ENCODE measurements at regions of chr10 and their contacts with region 1.

Region 1: GRCh38 chr10:100009793-100010676 is at the start of gene DNMBP:
- DNase-seq: peak; percentile 99
- H3K4me3 ChIP-seq: peak within 1 kb of the TSS; percentile 79 to 93
- H3K27ac ChIP-seq: peak within 1 kb of the TSS; percentile 50 to 99; a peak in 3 of 4 replicates
- H3K4me1 ChIP-seq: peaks cover 10 to 13% of the 10 kb centered on the region in 2 experiments
- H3K27me3 ChIP-seq: no peaks in the 10 kb centered on the region
- CTCF ChIP-seq: peak; percentile 65
- EP300 ChIP-seq: no peak
- RAD21 ChIP-seq: peak; percentile 29; the same call in 1 of the 2 replicates
- polyA plus RNA-seq, gene DNMBP: 36.0 and 40.2 TPM in 2 replicates

Region 2: DNA sequence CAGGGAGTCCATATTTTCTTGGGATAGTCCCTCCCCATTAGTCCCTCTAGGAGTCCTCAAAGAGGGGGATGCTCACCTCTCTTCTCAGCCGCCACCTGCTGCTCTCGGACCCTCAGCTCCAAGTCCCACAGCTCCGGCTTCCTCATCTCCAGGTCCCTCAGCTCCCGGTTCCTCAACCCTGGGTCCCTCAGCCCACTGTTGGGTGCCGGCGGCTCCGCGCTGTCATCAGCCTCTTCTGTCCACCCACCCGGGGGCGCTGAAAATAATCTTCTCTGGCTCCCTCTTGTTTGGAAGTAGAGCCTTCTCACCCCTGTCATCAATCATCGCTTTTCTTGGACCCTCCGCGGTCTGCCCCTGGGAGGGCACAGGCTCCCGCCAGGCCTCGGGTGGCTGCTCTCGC is 694.2 kb before region 1 on chr10:
- CTCF ChIA-PET with region 1: no interaction called
- POLR2A ChIA-PET with region 1: no interaction called
- DNase-seq: no peak
- H3K4me3 ChIP-seq: no peak overlapping the region
- H3K27ac ChIP-seq: no peak overlapping the region
- H3K4me1 ChIP-seq: no peaks in the 10 kb centered on the region
- H3K27me3 ChIP-seq: no peaks in the 10 kb centered on the region; the same call in 1 of the 2 replicates
- CTCF ChIP-seq: no peak
- EP300 ChIP-seq: no peak
- RAD21 ChIP-seq: no peak

Region 3: GRCh38 chr10:99854860-99855259 is 155.2 kb before region 1 on chr10:
- CTCF ChIA-PET with region 1: interaction called, 52 read pairs
- POLR2A ChIA-PET with region 1: no interaction called
- DNase-seq: peak; percentile 50
- H3K4me3 ChIP-seq: no peak overlapping the region
- H3K27ac ChIP-seq: no peak overlapping the region; a peak in 1 of 4 replicates
- H3K4me1 ChIP-seq: no peaks in the 10 kb centered on the region
- H3K27me3 ChIP-seq: no peaks in the 10 kb centered on the region
- CTCF ChIP-seq: peak; percentile 72
- EP300 ChIP-seq: no peak
- RAD21 ChIP-seq: peak; percentile 78

Region 4: DNA sequence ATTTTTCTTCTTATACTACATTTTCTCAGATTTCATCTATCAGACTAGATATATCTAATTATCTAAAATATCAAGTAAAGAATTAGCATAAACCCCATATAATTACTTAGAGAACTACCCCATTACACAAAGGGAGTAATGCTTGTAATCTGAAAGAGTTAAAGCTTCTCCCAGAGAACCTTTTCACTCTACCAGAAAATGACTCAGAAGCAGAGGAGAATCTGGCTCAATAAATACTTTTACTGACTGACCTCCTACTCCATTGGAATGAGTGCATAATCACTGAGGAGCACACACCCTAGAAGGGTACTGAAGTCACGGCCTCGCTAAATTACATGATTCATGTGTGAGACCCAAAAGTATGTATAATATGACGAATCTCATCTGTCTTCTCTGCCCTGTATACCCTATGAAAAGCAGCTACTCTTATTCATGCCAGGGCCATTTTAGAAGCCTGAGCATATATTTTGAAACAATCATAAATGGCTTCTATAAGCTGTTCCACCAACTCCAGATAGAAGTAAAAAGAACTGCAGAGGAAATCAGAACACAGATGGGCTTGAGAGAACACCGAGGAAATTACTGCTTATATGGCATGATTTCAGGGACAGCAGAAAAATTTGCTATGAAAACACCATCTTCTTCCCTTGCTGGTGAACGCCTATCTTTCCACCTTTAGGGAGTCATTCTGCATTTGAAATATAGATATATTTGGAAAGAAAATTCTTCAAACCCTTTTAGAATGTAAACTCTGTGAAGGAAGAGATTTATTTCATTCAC is 33.0 kb before region 1 on chr10:
- CTCF ChIA-PET with region 1: interaction called, 11 read pairs
- POLR2A ChIA-PET with region 1: no interaction called
- DNase-seq: no peak
- H3K4me3 ChIP-seq: no peak overlapping the region; a peak in 1 of 4 replicates
- H3K27ac ChIP-seq: peak overlapping the region; percentile 69 to 94
- H3K4me1 ChIP-seq: peaks cover 0 to 54% of the 10 kb centered on the region in 2 experiments; a peak in 3 of 4 replicates
- H3K27me3 ChIP-seq: no peaks in the 10 kb centered on the region
- CTCF ChIP-seq: no peak
- EP300 ChIP-seq: peak in 1 of 2 experiments; percentile 31; a peak in 1 of 4 replicates
- RAD21 ChIP-seq: no peak

Region 5: GRCh38 chr10:99993701-99994689 is 16.0 kb before region 1 on chr10:
- CTCF ChIA-PET with region 1: interaction called, 64 read pairs
- POLR2A ChIA-PET with region 1: no interaction called
- DNase-seq: no peak
- H3K4me3 ChIP-seq: no peak overlapping the region
- H3K27ac ChIP-seq: peak overlapping the region; percentile 36 to 83
- H3K4me1 ChIP-seq: peaks cover 4 to 48% of the 10 kb centered on the region in 2 experiments
- H3K27me3 ChIP-seq: no peaks in the 10 kb centered on the region
- CTCF ChIP-seq: no peak
- EP300 ChIP-seq: no peak
- RAD21 ChIP-seq: no peak

Region 6: DNA sequence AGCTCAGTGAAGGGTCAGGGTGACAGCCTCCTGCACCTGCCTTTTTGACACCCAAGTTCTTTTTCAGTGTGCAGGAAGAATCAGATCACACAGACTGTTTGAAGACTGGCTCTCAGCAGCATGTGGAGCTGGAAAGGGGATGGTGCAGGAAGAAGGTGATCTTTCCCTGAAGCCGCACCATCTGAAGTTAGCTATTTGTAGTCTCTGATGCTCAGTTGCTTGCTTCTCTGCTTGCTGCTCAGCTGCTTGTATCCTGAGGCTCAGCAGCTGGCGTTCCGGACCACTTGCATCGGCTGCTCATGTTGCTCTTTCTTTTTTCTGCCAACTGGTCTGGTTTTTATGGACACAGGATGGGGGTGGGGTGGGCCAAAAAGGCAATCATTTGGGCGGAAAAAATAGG is 15.5 kb after region 1 on chr10:
- CTCF ChIA-PET with region 1: interaction called, 25 read pairs
- POLR2A ChIA-PET with region 1: interaction called, 3 read pairs
- DNase-seq: no peak
- H3K4me3 ChIP-seq: no peak overlapping the region
- H3K27ac ChIP-seq: no peak overlapping the region
- H3K4me1 ChIP-seq: peaks cover 0 to 5% of the 10 kb centered on the region in 2 experiments; a peak in 1 of 4 replicates
- H3K27me3 ChIP-seq: no peaks in the 10 kb centered on the region
- CTCF ChIP-seq: no peak
- EP300 ChIP-seq: no peak
- RAD21 ChIP-seq: no peak

Region 7: GRCh38 chr10:100046021-100046486 is 36.0 kb after region 1 on chr10:
- CTCF ChIA-PET with region 1: interaction called, 53 read pairs
- POLR2A ChIA-PET with region 1: no interaction called
- DNase-seq: peak; percentile 74
- H3K4me3 ChIP-seq: no peak overlapping the region; a peak in 1 of 4 replicates
- H3K27ac ChIP-seq: peak overlapping the region in 1 of 2 experiments; percentile 41; a peak in 1 of 4 replicates
- H3K4me1 ChIP-seq: peaks cover 0 to 12% of the 10 kb centered on the region in 2 experiments; a peak in 2 of 4 replicates
- H3K27me3 ChIP-seq: no peaks in the 10 kb centered on the region
- CTCF ChIP-seq: peak; percentile 97
- EP300 ChIP-seq: no peak
- RAD21 ChIP-seq: peak; percentile 87

Region 8: GRCh38 chr10:100065084-100065660 is 55.1 kb after region 1 on chr10:
- CTCF ChIA-PET with region 1: no interaction called
- POLR2A ChIA-PET with region 1: no interaction called
- DNase-seq: no peak
- H3K4me3 ChIP-seq: no peak overlapping the region
- H3K27ac ChIP-seq: no peak overlapping the region
- H3K4me1 ChIP-seq: no peaks in the 10 kb centered on the region
- H3K27me3 ChIP-seq: no peaks in the 10 kb centered on the region
- CTCF ChIP-seq: no peak
- EP300 ChIP-seq: no peak
- RAD21 ChIP-seq: no peak

Region 9: DNA sequence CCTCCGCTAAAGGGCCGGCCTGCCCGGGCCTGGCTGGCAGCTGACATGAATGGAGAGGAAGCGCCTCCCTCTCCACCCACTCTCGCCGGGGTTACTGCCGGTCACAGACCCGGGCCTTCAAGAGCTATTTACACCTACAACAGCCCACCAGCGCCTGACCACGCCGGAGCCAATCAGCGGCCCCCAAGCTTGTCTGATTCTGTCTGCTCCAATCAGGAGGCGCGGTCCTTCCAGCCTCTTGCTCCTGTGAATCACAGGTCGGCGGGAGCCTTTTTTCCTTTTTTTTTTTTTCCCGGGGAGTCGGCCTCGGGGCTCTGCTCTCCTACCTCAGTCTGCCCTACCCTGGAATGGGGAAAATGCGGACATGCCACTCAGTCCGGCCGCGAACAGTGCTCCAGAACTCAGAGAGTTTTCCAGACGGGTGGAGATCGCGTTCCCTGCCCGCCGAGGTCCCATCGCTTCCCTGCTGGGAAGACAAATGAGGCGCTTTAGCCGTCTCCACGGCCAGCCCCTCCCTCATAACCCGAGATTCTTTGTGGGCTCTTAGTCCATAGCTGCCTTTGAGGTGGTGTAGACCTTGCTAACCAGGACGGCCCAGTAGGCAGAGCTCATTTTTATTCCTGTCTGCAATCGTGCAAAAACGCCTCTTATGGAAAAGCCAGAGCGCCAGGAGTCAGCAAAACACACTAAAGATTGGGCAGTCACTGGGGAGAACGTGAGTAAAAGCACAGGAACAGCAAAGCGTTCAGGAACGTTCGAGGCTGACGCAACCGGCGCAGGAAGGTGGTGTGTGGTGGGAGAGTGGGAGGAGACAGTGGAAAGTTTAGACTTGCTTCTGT is 363.5 kb after region 1 on chr10:
- CTCF ChIA-PET with region 1: no interaction called
- POLR2A ChIA-PET with region 1: no interaction called
- DNase-seq: peak; percentile 92
- H3K4me3 ChIP-seq: peak overlapping the region; percentile 56 to 69
- H3K27ac ChIP-seq: peak overlapping the region; percentile 97 to 99
- H3K4me1 ChIP-seq: peaks cover 20 to 27% of the 10 kb centered on the region in 2 experiments
- H3K27me3 ChIP-seq: no peaks in the 10 kb centered on the region
- CTCF ChIP-seq: no peak
- EP300 ChIP-seq: peak; percentile 7 to 12; a peak in 1 of 4 replicates
- RAD21 ChIP-seq: peak; percentile 3

Measured in SK-N-SH (cell line).